ENCODE measurements at regions of chr6 and their contacts with region 1.

Region 1: GRCh38 chr6:127186889-127187288 is 68.4 kb downstream of the RSPO3 start:
- H3K4me3 Mint-ChIP-seq: no peak overlapping the region
- H3K27ac Mint-ChIP-seq: no peak overlapping the region
- H3K4me1 Mint-ChIP-seq: peaks cover 12% of the 10 kb centered on the region
- H3K27me3 Mint-ChIP-seq: no peaks in the 10 kb centered on the region

Region 2: DNA sequence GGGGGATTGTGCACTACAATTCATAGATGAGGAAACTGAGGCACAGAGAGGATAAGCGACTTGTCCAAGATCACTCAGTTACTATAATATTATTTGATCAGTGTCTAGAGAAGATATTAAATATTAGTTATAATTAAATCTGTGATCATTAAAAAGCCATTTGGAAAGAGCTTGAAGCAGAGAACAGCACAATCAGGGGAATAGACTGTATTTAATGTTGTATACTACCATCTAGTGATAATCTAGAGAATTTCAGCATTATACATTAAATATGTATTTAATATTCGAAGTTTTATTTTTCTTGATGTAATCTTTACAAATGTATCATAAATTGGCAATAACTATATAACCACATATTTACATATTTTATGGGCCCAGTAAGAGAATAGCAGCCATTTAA is 352.4 kb after region 1 on chr6:
- intact Hi-C with region 1: loop called (anchors 5 kb)
- H3K4me3 Mint-ChIP-seq: no peak overlapping the region
- H3K27ac Mint-ChIP-seq: no peak overlapping the region
- H3K4me1 Mint-ChIP-seq: peaks cover 7% of the 10 kb centered on the region
- H3K27me3 Mint-ChIP-seq: peaks cover 11% of the 10 kb centered on the region

Measured in dendritic cell treated with granulocyte-macrophage colony-stimulating factor and Interleukin-4, amounts not matched to agents 40 ng/mL and 50 ng/mL, for 4 days (primary cell).